Heart right ventricle (tissue), 16 donors: ENCODE measurements at regions of chr2 and their contacts with region 1.

Region 1: GRCh38 chr2:39913648-39914461 is 134.8 kb upstream of the THUMPD2 start:
- DNase-seq: peak in 1 of 2 donors; percentile 26
- ATAC-seq: peak in 7 of 8 donors; percentile 63 to 82 (median 73)
- H3K4me3 ChIP-seq: no peak overlapping the region
- H3K27ac ChIP-seq: no peak overlapping the region
- H3K4me1 ChIP-seq: peaks cover 0 to 8% (median 4%) of the 10 kb centered on the region in 9 donors
- H3K27me3 ChIP-seq: peaks cover 0 to 4% (median 0%) of the 10 kb centered on the region in 7 donors
- CTCF ChIP-seq: peak; percentile 53 to 91 (median 81)

Region 2: DNA sequence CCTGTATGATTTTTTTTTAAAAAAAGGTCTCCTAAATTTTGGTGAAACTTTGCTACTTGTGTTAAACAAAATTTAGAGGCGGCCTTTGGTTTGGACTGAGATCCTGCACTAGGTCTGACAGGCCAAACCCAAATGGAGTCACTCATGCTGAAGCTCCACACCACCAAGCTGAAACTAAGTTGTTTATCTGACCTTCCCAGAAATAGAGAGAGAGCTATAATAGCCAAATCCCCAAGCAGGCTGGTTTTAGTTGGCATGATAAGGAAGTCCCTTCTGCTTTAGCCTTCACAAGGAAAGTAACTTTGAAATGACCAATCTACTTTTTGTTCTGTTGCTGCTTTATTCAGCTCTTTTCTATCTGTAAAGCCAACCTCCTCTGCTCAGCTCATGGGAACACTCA is 117.7 kb before region 1 on chr2:
- intact Hi-C with region 1: no loop called
- DNase-seq: no peak
- ATAC-seq: peak in 2 of 8 donors; percentile 57 to 59
- H3K4me3 ChIP-seq: no peak overlapping the region
- H3K27ac ChIP-seq: peak overlapping the region in 2 of 10 donors; percentile 6 to 29
- H3K4me1 ChIP-seq: peaks cover 0 to 12% (median 0%) of the 10 kb centered on the region in 9 donors
- H3K27me3 ChIP-seq: no peaks in the 10 kb centered on the region
- CTCF ChIP-seq: no peak

Region 3: DNA sequence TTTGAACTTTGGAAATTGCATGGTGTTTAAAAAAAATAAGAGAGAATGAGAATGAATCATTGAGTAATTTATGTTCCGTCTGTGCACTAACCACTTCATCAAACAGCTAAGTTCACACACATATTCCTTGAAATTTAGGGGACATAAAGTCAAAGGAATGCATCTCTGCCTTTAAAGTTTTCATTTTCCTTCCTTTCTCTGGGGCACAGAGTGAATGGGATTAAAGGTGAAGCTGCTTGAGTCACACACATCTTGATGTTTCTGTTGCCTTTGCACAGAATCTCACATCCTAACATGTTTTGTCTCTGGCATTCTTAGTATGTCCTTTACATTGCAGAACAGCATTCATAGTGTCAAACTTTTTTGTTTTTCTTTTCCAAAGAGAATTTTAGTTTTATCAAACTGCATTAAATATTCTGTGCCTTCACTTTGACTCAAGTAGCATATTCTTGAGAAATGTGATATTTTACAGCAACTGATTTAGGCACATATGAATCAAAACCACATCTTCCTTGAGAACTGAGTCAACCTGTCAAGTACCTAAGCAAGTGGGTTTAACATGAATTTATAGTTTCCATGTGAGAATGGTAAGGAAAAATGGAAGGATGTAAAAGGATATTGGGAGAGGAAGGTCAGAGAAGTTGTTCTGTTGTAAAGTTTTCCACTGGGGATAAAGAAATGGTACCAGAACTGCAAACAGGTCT is 34.3 kb after region 1 on chr2:
- intact Hi-C with region 1: no loop called
- DNase-seq: no peak
- ATAC-seq: no peak
- H3K4me3 ChIP-seq: no peak overlapping the region
- H3K27ac ChIP-seq: no peak overlapping the region
- H3K4me1 ChIP-seq: no peaks in the 10 kb centered on the region
- H3K27me3 ChIP-seq: no peaks in the 10 kb centered on the region
- CTCF ChIP-seq: no peak

Region 4: GRCh38 chr2:40095000-40095399 is 181.1 kb after region 1 on chr2:
- intact Hi-C with region 1: no loop called
- DNase-seq: no peak
- ATAC-seq: peak in 3 of 8 donors; percentile 26 to 45 (median 28)
- H3K4me3 ChIP-seq: no peak overlapping the region
- H3K27ac ChIP-seq: peak overlapping the region in 6 of 10 donors; percentile 9 to 54 (median 41)
- H3K4me1 ChIP-seq: peaks cover 0 to 40% (median 16%) of the 10 kb centered on the region in 9 donors
- H3K27me3 ChIP-seq: no peaks in the 10 kb centered on the region
- CTCF ChIP-seq: no peak

Region 5: DNA sequence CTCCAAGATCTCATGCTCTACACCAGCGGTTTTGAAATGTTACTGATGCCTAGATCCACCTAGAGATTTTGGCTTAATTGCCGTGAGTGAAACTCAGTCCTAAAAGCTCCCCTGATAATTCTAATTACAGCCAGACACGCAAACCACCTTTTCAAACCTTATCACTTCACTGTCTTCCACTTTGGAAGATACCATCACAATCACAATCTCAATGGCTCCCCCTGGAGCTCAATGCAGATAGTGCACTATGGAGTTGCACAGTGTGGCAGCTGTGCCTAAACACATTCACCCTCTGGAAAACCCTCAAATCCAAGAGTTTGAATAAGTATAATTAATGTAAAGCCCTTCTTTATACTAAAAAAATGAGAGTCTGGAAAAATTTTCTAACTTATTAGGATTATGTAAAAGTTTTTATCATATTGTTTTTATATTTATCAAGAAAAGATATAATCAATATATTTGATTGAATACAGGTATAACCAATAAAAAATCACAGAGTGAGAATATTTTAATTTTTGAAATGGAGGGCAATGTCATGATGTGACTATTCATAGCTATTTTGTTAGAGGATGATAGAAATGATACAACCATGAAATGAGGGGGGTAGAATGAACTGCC is 640.9 kb after region 1 on chr2:
- intact Hi-C with region 1: loop called in 7 of 10 experiments (anchors 1 to 5 kb)
- DNase-seq: peak; percentile 18 to 76
- ATAC-seq: peak; percentile 52 to 88 (median 81)
- H3K4me3 ChIP-seq: peak overlapping the region in 1 of 10 donors; percentile 4
- H3K27ac ChIP-seq: peak overlapping the region in 4 of 10 donors; percentile 30 to 51 (median 42)
- H3K4me1 ChIP-seq: peaks cover 0 to 14% (median 4%) of the 10 kb centered on the region in 9 donors
- H3K27me3 ChIP-seq: no peaks in the 10 kb centered on the region
- CTCF ChIP-seq: peak; percentile 58 to 96 (median 89)

Region 6: DNA sequence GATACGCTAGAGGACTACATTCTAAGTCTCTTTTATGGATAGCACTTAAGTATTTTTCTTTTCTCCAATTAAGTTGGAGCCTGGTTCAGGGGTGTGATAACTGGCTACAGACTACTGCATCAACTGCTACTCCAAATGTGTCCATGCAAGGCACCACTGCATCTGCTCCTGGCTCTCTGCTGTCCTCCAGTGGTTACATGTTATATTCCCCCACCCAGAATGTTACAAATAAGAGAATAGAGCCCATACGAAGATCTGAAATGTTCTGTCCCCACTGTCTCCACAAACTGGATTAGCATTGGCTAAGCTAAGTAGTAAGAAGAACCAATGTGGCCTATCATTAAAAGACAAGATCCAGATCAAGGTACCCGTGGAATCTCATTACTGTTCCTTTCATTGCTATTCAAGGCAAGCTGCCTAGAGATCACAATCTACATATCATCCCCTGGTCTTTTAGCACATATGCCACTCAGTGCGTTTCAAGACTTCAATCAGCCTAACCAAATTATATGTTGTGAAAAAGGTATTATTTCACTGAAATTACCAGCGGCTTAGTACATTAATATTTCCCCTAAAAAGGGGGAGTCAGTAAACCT is 846.3 kb after region 1 on chr2:
- intact Hi-C with region 1: loop called in 6 of 10 experiments (anchors 5 to 10 kb)
- DNase-seq: peak; percentile 8 to 38
- ATAC-seq: peak; percentile 51 to 89 (median 84)
- H3K4me3 ChIP-seq: no peak overlapping the region
- H3K27ac ChIP-seq: no peak overlapping the region
- H3K4me1 ChIP-seq: peaks cover 0 to 19% (median 6%) of the 10 kb centered on the region in 9 donors
- H3K27me3 ChIP-seq: no peaks in the 10 kb centered on the region
- CTCF ChIP-seq: peak; percentile 44 to 80 (median 67)

Region 7: GRCh38 chr2:41709702-41710599 is 1796.1 kb after region 1 on chr2:
- intact Hi-C with region 1: loop called in 1 of 10 experiments (anchors 10 kb)
- DNase-seq: no peak
- ATAC-seq: no peak
- H3K4me3 ChIP-seq: no peak overlapping the region
- H3K27ac ChIP-seq: no peak overlapping the region
- H3K4me1 ChIP-seq: peaks cover 0 to 9% (median 0%) of the 10 kb centered on the region in 9 donors
- H3K27me3 ChIP-seq: no peaks in the 10 kb centered on the region
- CTCF ChIP-seq: no peak